Motor neuron (in vitro differentiated cells): ENCODE measurements at regions of chr12 and their contacts with region 1.

Region 1: GRCh38 chr12:120346681-120347080 is 19.1 kb upstream of the PLA2G1B start:
- ATAC-seq: peak in 1 of 8 experiments; percentile 35
- H3K4me3 ChIP-seq: no peak overlapping the region
- H3K27ac ChIP-seq: no peak overlapping the region
- H3K4me1 ChIP-seq: no peaks in the 10 kb centered on the region

Region 2: DNA sequence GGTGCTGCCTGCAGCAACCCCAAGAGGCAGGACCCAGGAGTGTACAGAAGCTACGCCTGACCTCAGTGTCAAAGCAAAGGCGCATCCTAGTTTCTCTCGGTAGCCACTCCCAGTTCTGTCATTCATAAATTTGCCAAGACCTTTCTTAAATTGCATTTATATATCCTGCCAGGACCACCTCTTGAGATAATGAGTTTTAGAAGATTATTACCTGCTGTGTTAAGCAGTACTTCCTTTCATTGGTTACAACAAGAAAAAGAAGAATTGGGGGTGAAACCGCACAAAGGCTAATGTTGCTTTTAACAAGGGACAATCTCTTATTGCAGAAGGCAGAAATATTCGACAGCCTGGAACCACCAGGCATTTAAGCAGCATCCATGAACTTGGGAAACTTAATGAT is 527.4 kb before region 1 on chr12:
- in situ Hi-C with region 1: no loop called
- ATAC-seq: no peak
- H3K4me3 ChIP-seq: no peak overlapping the region
- H3K27ac ChIP-seq: no peak overlapping the region
- H3K4me1 ChIP-seq: peaks cover 0 to 2% of the 10 kb centered on the region in 2 donors

Region 3: DNA sequence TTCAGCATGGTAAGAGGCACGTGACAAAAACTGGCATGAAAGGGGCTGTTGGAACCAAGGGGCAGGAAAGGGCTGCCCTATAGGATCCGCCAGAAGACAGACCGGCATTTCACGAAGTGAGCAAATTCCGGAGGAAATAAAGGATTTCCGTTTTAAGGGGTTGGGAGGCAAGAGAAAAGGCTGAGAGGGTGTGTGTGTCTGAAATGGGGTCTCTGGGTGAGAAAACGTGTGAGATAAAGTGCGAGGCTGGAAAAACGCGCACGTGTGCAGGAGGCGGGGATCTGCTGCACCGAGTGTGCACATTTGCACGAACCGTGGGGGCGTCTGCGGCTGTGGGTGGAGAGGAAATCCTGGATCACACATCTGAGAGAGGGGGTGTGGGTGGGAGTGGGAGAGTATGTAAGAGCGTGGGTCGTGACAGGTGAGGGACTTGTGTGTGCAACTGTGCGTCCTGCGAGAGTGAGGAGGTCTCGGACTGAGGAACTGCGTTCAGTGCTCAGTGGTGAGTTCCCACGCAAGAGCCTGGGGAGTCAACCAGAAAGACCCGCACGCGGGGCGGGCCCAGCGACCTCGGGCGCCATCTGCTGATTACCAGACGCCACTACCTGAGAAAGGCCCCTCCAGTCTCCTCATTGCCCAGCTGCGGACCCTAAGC is 749.0 kb after region 1 on chr12:
- in situ Hi-C with region 1: loop called in 3 of 9 experiments (anchors 25 kb)
- ATAC-seq: peak; percentile 82 to 99 (median 98)
- H3K4me3 ChIP-seq: peak overlapping the region in 4 of 5 donors; percentile 12 to 19 (median 12)
- H3K27ac ChIP-seq: no peak overlapping the region
- H3K4me1 ChIP-seq: peaks cover 10 to 17% of the 10 kb centered on the region in 2 donors

Region 4: GRCh38 chr12:121110211-121110940 is 763.7 kb after region 1 on chr12:
- in situ Hi-C with region 1: loop called in 2 of 9 experiments (anchors 25 kb)
- ATAC-seq: peak; percentile 79 to 89 (median 86)
- H3K4me3 ChIP-seq: no peak overlapping the region
- H3K27ac ChIP-seq: no peak overlapping the region
- H3K4me1 ChIP-seq: peaks cover 0 to 8% of the 10 kb centered on the region in 2 donors